Aorta (tissue), 5 donors: ENCODE measurements at regions of chr12 and their contacts with region 1.

Region 1: GRCh38 chr12:6867413-6868210 is at the start of gene TPI1:
- DNase-seq: peak; percentile 82 to 97
- ATAC-seq: peak; percentile 93
- H3K4me3 ChIP-seq: peak within 1 kb of the TSS; percentile 71 to 88
- H3K27ac ChIP-seq: peak within 1 kb of the TSS in 1 of 2 donors; percentile 77
- H3K4me1 ChIP-seq: peaks cover 0 to 1% of the 10 kb centered on the region in 2 donors
- H3K27me3 ChIP-seq: no peaks in the 10 kb centered on the region
- total RNA-seq, gene TPI1: 317 TPM

Region 2: GRCh38 chr12:6792522-6793201 is 75.0 kb before region 1 on chr12:
- intact Hi-C with region 1: no loop called
- DNase-seq: peak in 1 of 2 donors; percentile 82
- ATAC-seq: peak; percentile 58
- H3K4me3 ChIP-seq: no peak overlapping the region
- H3K27ac ChIP-seq: no peak overlapping the region
- H3K4me1 ChIP-seq: no peaks in the 10 kb centered on the region
- H3K27me3 ChIP-seq: no peaks in the 10 kb centered on the region

Region 3: DNA sequence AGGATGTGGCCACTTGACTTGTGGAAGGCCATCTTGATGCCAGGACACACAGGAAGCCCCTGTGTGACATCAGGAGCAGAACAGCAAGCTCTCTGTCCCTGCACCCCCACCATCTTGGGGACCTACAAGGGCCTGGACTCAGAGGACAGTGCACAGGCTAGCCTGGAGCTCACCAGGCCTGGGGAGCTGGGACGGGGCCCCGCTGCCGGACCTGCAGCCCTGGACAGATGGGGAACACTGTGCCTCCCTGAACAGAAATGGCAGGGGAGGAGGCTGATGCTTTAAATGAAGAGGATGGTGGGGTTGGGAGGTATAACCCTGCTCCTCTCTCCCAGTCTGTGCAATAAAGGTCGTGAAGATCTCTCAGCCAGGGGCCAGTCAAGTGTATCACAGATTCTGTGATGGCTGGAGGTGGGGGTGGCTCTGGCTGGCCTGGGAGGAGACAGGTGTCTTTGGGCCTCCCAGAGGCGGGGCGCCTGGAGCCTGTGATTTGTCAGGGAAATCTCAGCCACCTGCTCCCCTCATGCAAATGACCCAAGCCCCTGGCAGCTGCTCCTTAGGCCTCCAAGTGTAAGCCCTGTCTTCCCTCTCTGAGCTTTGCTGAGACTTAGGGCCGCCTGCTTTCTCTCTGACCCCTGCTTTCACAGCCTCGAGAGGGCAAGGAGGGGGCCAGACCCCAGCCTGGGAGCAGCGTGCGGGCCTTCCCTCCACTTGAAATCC is 28.0 kb before region 1 on chr12:
- intact Hi-C with region 1: no loop called
- DNase-seq: peak in 1 of 2 donors; percentile 38
- ATAC-seq: no peak
- H3K4me3 ChIP-seq: no peak overlapping the region
- H3K27ac ChIP-seq: no peak overlapping the region
- H3K4me1 ChIP-seq: no peaks in the 10 kb centered on the region
- H3K27me3 ChIP-seq: no peaks in the 10 kb centered on the region

Region 4: DNA sequence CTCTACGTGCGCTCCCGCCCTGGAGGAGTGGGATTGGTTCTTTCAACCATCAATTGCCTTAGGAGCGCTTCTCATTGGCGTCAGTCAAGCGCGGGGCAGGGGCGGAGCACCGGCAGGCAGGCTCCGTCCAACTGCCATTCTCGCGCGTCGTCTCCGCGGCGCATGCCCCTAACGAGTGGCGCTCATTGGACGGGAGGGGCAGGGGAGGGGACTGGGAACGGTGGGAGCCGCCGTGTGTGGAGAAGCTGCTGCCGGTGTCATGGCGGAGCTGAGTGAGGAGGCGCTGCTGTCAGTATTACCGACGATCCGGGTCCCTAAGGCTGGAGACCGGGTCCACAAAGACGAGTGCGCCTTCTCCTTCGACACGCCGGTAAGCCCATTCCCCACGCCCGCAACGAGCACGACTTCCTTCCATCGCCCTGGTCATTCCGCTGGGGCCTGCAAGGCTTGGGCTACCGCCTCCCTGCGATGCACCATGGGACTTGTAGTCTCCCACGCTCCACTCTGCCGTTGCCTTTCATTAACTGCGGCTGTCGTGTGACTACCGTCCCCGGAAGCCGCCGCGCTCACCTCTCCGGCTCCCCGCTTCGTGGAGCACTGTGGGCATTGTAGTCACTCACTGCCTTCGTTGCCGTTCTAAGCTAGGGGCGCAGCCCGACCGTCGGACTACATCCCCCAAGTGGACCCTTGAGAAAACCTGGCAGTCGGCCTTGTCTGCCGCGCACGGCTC is 15.5 kb before region 1 on chr12 and contains the start of gene USP5:
- intact Hi-C with region 1: loop called in 1 of 2 experiments (anchors 2 kb)
- DNase-seq: peak; percentile 99 to 100
- ATAC-seq: peak; percentile 96
- H3K4me3 ChIP-seq: peak within 1 kb of the TSS; percentile 58 to 60
- H3K27ac ChIP-seq: peak within 1 kb of the TSS; percentile 58 to 78
- H3K4me1 ChIP-seq: no peaks in the 10 kb centered on the region
- H3K27me3 ChIP-seq: no peaks in the 10 kb centered on the region
- total RNA-seq, gene USP5: 59.5 to 64.6 TPM

Region 5: DNA sequence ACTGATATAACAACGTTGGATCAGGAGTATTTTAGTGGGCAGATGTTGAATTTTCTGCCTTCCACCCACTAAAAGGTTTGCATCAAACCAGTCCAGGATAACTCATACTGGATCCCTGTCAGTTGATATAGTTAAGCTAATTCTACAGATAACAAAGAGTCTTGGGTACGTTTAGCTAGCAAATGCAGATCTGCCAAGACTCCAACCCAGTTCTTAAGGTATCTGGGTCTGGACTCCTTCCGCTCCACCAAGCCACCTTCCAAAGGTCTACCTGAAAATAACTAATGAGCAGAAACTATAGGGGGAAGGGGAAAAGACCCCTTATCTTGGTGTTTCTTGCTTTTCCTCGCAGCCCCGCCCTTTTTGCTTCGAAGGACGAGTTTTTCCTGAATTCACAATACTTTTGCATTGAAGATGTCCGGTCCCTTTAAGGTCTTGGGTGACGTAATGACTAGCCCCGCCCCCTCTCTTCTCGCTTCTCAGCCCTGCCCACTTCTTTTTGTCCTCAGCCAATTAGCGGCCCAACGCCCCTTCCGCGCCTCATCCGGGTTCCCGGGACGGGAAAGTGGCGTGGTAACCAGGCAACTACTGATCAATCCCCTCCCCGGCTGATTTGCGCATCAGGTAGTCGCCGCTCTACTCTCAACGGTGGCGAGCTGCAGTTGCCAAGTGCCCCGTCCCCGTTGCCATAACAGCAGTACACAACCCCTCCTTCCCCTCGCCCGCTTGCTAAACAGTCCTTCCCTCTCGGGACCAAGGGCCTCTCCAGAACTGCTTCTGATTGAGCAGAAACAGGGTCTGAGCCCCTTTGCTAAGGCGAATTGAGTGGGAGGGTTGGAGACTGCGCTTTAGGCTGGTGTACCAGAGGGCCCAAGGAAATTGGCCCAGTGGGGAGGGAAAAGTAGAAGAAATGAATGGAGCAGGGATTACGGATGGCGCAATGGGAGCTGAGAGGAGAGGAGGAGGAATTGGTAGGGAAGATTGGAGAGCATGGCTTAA is 37.0 kb after region 1 on chr12 and contains the start of gene LRRC23:
- intact Hi-C with region 1: no loop called
- DNase-seq: peak; percentile 98 to 99
- ATAC-seq: peak; percentile 97
- H3K4me3 ChIP-seq: peak within 1 kb of the TSS; percentile 15 to 62
- H3K27ac ChIP-seq: peak within 1 kb of the TSS in 1 of 2 donors; percentile 62
- H3K4me1 ChIP-seq: no peaks in the 10 kb centered on the region
- H3K27me3 ChIP-seq: no peaks in the 10 kb centered on the region
- total RNA-seq, gene LRRC23: 5.3 to 11.2 TPM

Region 6: GRCh38 chr12:6927379-6928024 is 59.9 kb after region 1 on chr12 and contains the start of gene ATN1:
- intact Hi-C with region 1: loop called in 1 of 2 experiments (anchors 5 kb)
- DNase-seq: peak; percentile 93 to 95
- ATAC-seq: peak; percentile 71
- H3K4me3 ChIP-seq: peak within 1 kb of the TSS; percentile 97 to 99
- H3K27ac ChIP-seq: peak within 1 kb of the TSS; percentile 96
- H3K4me1 ChIP-seq: no peaks in the 10 kb centered on the region
- H3K27me3 ChIP-seq: no peaks in the 10 kb centered on the region
- total RNA-seq, gene ATN1: 138 to 146 TPM

Region 7: GRCh38 chr12:6937481-6938297 is 70.1 kb after region 1 on chr12:
- intact Hi-C with region 1: loop called (anchors 2 to 5 kb)
- DNase-seq: peak; percentile 96 to 97
- ATAC-seq: peak; percentile 94
- H3K4me3 ChIP-seq: peak overlapping the region; percentile 8 to 49
- H3K27ac ChIP-seq: peak overlapping the region; percentile 43 to 53
- H3K4me1 ChIP-seq: no peaks in the 10 kb centered on the region
- H3K27me3 ChIP-seq: no peaks in the 10 kb centered on the region

Region 8: DNA sequence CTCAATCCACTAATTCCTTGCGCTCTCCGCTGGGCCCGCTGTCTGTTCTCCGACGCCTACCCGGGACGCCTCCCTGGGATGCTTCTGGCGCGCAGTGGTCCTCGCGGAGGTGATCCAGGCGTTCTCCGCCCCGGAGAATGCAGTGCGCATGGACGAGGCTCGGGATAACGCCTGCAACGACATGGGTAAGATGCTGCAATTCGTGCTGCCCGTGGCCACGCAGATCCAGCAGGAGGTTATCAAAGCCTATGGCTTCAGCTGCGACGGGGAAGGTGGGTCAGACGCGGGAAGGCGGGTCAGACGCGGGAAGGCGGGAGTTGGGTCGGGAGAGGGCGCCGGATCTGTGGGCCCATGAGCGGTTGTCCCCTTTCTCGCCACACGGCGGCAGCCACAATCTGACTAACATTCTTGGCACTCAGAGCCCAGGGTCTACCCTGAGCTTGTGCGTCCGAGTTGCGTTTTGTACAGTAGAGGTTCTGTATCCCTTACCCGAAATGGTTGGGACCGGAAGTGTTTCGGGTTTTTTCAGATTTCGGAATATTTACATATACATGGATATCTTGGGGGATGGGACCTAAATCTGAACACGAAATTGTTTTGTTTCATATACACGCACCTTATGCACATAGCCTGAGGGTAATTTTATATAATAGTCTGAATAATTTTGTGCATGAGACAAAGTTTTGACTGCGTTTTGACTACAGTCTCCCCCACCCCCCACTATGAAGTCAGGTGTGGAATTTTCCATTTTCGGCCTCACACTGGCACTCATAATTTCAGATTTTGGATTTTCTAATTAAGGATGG is 77.0 kb after region 1 on chr12:
- intact Hi-C with region 1: loop called (anchors 2 to 5 kb)
- DNase-seq: peak; percentile 96 to 97
- ATAC-seq: peak; percentile 90
- H3K4me3 ChIP-seq: peak overlapping the region; percentile 34 to 70
- H3K27ac ChIP-seq: peak overlapping the region; percentile 93 to 99
- H3K4me1 ChIP-seq: no peaks in the 10 kb centered on the region
- H3K27me3 ChIP-seq: peaks cover 0 to 4% of the 10 kb centered on the region in 2 donors